ENCODE measurements at regions of chr22 and their contacts with region 1.

Region 1: DNA sequence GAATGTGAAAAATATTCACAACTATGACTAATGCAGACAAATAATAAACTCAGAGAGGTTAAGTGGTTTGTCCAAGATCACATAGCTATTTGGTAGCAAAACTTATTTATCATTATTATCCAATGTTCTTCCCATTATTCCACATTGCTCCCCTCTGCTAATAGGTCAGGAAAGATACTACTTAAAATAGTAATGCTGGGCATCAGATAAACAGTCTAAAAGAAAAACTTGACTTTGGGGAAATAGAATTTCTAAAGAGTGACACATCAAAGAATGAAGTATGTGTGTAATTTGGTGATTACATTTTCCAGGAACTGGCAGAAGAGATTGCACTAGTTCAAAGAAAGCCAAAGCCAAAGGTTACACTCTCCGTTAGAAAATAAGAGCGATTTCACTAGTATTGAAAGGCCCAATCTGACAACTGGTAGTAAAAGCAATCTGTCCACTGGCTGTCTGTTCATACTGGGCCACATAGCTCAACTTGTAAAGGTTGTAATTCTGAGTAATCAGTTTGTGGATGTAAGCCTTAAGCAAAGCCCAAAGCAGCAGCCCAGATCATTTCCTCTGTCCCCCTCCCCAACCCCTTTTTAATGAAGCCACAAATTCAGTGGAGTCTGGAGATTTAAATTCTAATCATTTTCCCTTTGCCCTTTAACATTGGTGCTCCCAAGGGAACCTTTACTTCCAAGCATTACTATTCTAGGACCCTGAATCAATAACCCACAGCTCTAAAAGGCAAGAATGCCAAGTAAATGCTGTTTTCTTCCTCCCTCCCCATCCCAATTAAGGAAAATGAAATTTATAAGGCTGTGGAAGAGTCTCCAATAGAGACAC is 283.5 kb downstream of the TTC28 start:
- DNase-seq: no peak
- ATAC-seq: no peak
- H3K4me3 ChIP-seq: no peak overlapping the region
- H3K27ac ChIP-seq: no peak overlapping the region
- H3K4me1 ChIP-seq: peaks cover 0 to 4% of the 10 kb centered on the region in 2 donors
- H3K27me3 ChIP-seq: no peaks in the 10 kb centered on the region
- CTCF ChIP-seq: no peak
- POLR2A ChIP-seq: no peak

Region 2: DNA sequence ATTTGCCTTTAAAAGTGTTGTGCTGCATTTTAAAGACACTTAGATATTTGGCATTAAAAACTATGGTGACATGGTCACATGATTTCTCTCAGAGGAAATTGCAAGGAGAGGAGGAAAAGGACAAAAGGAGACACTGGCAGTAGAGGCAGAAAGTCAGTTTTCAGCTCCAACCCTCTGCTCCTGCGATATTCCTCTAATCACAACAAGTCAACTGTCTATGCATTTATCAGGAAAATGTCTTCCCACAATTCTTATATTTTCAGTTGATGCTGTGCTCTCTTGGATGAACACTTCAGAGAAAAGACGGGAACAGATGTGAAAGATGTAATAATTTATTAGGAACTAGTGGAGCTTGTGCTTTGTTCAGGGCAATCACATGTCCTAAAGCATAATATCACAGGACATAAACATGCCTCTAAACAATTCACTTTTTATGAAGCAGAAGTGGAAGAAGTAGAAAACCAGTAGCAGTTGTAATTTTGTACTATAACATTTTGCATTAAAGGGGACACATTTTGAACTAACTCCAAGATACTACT is 136.3 kb before region 1 on chr22:
- in situ Hi-C with region 1: no loop called
- intact Hi-C with region 1: no loop called
- DNase-seq: no peak
- ATAC-seq: no peak
- H3K4me3 ChIP-seq: no peak overlapping the region
- H3K27ac ChIP-seq: no peak overlapping the region
- H3K4me1 ChIP-seq: peaks cover 0 to 5% of the 10 kb centered on the region in 2 donors
- H3K27me3 ChIP-seq: no peaks in the 10 kb centered on the region
- CTCF ChIP-seq: no peak
- POLR2A ChIP-seq: no peak

Region 3: DNA sequence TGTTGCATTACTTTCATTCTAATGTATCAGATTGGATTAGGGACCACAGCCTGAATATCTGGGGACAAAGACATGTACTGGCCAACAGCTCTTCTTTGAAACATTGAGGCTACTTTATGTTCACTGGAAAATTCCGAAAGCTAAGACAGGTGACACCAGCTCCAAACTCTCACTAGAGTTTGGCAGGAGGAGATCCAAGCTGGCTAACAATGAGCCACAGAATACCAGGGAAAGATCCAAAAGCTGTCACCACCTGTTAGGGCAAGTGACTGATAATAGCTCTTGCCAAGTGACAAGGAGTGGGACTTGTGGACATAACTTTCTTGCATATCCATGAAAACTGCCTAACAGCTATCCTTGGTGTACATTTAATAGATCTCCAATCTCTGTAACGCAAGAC is 49.8 kb before region 1 on chr22:
- in situ Hi-C with region 1: no loop called
- intact Hi-C with region 1: loop called (anchors 2 kb)
- DNase-seq: no peak
- ATAC-seq: peak; percentile 62 to 85
- H3K4me3 ChIP-seq: no peak overlapping the region
- H3K27ac ChIP-seq: peak overlapping the region in 1 of 4 donors; percentile 22
- H3K4me1 ChIP-seq: peaks cover 16 to 27% of the 10 kb centered on the region in 2 donors
- H3K27me3 ChIP-seq: no peaks in the 10 kb centered on the region
- CTCF ChIP-seq: no peak
- POLR2A ChIP-seq: no peak

Region 4: GRCh38 chr22:28480000-28480715 is 84.0 kb after region 1 on chr22:
- in situ Hi-C with region 1: loop called in 1 of 4 experiments (anchors 25 kb)
- intact Hi-C with region 1: no loop called
- DNase-seq: no peak
- ATAC-seq: no peak
- H3K4me3 ChIP-seq: no peak overlapping the region
- H3K27ac ChIP-seq: no peak overlapping the region
- H3K4me1 ChIP-seq: no peaks in the 10 kb centered on the region
- H3K27me3 ChIP-seq: no peaks in the 10 kb centered on the region
- CTCF ChIP-seq: no peak
- POLR2A ChIP-seq: no peak

Region 5: DNA sequence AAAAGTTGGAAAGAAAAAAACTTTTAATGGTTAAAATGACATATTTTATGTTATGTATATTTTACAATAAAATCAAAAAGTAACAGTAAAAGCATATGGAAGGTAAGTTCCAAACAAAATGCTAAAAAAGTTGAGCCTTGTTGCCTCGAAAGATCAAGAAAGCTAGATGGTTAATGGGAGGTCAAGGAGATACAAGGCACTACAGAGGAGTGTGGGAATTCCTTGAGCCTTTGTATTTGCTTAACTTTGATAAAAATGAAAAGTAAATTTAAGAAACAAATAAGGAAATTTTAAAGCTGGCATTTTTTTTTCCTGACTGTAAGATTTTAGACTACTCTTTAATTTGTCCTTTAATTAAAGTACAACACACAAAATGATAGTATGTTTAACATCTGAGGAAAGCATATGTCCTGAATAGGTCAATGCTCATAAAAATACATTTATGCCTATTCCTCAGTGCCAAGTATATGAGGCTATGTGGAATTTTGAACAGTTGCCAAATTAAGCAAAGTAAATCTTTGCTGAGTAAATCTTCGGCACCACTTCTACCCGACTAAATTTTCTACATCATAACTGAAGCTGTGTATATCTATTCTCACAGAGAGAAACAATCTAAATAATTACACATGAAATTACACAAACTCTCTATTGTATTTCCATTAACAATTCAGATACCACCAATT is 174.7 kb after region 1 on chr22:
- in situ Hi-C with region 1: no loop called
- intact Hi-C with region 1: no loop called
- DNase-seq: no peak
- ATAC-seq: no peak
- H3K4me3 ChIP-seq: no peak overlapping the region
- H3K27ac ChIP-seq: no peak overlapping the region
- H3K4me1 ChIP-seq: no peaks in the 10 kb centered on the region
- H3K27me3 ChIP-seq: no peaks in the 10 kb centered on the region
- CTCF ChIP-seq: no peak
- POLR2A ChIP-seq: no peak

Measured in gastrocnemius medialis (tissue), 4 donors.